ENCODE measurements at regions of chr5 and their contacts with region 1.

Region 1: DNA sequence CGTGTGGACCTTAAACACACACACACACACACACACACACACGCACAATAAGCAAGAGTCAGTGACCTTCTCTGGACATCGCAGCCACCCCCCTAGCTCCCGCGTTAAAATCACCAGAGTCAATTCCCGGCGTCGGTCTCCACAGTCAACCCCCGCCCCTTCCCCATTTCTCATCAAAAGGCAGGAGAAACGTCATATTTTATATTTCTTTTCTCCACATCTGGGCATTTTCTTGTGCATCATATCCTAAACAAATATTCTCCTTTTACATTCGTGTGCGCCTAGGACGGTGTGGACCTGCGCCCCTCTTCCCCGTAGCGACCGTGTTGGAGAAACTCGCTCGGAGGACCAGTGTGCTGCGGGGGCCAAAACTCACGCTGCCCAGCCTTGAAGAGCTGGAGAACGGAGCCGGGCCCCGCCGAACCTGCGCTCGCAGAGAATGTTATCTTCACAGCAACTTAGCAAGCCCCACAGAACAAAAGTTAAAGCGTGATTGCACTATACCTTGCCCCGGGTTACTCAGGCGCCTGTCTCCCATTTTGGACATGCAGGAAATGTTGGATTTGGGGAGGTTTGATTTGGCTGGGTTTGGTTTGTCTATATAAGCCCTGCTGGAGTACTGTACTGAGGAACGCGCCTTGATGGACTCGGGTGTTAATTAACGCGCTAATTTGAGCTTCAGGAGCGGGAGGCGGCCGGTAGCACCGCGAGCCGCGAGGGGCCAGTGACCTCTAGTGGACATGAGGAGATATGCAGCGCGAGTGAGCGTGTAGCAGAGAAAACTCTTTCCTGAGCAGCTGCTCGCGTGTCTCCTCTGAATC is 192.4 kb downstream of the MEF2C start:
- DNase-seq: peak; percentile 43 to 83 (median 54)
- ATAC-seq: peak; percentile 88
- H3K4me3 ChIP-seq: peak overlapping the region; percentile 3
- H3K4me3 Mint-ChIP-seq: peak overlapping the region; percentile 71
- H3K27ac ChIP-seq: no peak overlapping the region
- H3K27ac Mint-ChIP-seq: peak overlapping the region; percentile 9
- H3K4me1 ChIP-seq: peaks cover 24% of the 10 kb centered on the region
- H3K4me1 Mint-ChIP-seq: peaks cover 28% of the 10 kb centered on the region
- H3K27me3 ChIP-seq: peaks cover 86 to 98% of the 10 kb centered on the region in 2 experiments
- H3K27me3 Mint-ChIP-seq: peaks cover 96% of the 10 kb centered on the region
- CTCF ChIP-seq: peak; percentile 80

Region 2: DNA sequence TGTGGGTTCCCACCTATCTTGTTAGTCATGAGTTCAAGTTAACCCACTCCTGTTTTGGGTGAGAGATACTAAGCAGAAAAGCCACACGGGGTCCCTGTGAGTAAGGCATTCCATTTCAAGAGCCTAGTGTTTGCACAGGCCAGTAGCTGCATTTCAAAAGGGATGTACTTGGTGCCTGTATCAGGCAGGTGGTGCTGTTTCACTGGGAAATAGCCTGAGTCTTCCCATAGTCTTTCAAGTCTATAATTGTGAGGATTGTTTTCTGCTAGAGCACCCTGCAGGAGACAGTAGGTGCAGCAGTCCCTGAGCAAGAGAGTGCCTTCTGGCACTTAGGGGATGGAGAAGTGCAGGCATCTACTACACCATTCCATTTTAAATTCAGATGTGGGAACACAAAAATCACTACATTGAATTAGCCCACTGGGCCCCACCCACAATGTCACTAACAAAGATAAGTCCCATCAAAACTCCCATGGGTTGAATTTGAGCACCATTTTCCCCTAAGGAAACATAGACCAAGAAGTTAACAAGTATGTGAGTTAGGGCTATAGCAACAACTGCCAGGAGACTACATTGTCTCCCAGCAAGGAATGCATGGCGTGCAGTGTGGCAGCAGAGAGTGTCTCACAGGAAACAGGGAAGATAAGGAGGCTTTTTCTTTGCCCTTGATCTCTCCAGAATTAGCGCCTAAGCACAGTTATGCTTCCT is 1809.7 kb before region 1 on chr5:
- CTCF ChIA-PET with region 1: no interaction called
- POLR2A ChIA-PET with region 1: no interaction called
- intact Hi-C with region 1: loop called in 1 of 2 experiments (anchors 10 kb)
- DNase-seq: peak in 11 of 14 experiments; percentile 1 to 68 (median 8)
- ATAC-seq: peak; percentile 88
- H3K4me3 ChIP-seq: no peak overlapping the region
- H3K4me3 Mint-ChIP-seq: no peak overlapping the region
- H3K27ac ChIP-seq: no peak overlapping the region
- H3K27ac Mint-ChIP-seq: no peak overlapping the region
- H3K4me1 ChIP-seq: no peaks in the 10 kb centered on the region
- H3K4me1 Mint-ChIP-seq: no peaks in the 10 kb centered on the region
- H3K27me3 ChIP-seq: peaks cover 0 to 4% of the 10 kb centered on the region in 2 experiments
- H3K27me3 Mint-ChIP-seq: peaks cover 7% of the 10 kb centered on the region
- CTCF ChIP-seq: peak; percentile 42

Region 3: GRCh38 chr5:87421307-87421706 is 1269.3 kb before region 1 on chr5:
- CTCF ChIA-PET with region 1: no interaction called
- POLR2A ChIA-PET with region 1: no interaction called
- intact Hi-C with region 1: loop called in 1 of 2 experiments (anchors 10 kb)
- DNase-seq: no peak
- ATAC-seq: no peak
- H3K4me3 ChIP-seq: no peak overlapping the region
- H3K4me3 Mint-ChIP-seq: no peak overlapping the region
- H3K27ac ChIP-seq: no peak overlapping the region
- H3K27ac Mint-ChIP-seq: no peak overlapping the region
- H3K4me1 ChIP-seq: no peaks in the 10 kb centered on the region
- H3K4me1 Mint-ChIP-seq: no peaks in the 10 kb centered on the region
- H3K27me3 ChIP-seq: no peaks in the 10 kb centered on the region
- H3K27me3 Mint-ChIP-seq: no peaks in the 10 kb centered on the region
- CTCF ChIP-seq: no peak

Region 4: GRCh38 chr5:87780831-87781760 is 909.5 kb before region 1 on chr5:
- CTCF ChIA-PET with region 1: interaction called, 20 read pairs
- POLR2A ChIA-PET with region 1: interaction called, 5 read pairs
- intact Hi-C with region 1: loop called (anchors 1 to 2 kb)
- DNase-seq: peak; percentile 52 to 88 (median 69)
- ATAC-seq: peak; percentile 94
- H3K4me3 ChIP-seq: no peak overlapping the region
- H3K4me3 Mint-ChIP-seq: no peak overlapping the region
- H3K27ac ChIP-seq: no peak overlapping the region
- H3K27ac Mint-ChIP-seq: no peak overlapping the region
- H3K4me1 ChIP-seq: no peaks in the 10 kb centered on the region
- H3K4me1 Mint-ChIP-seq: peaks cover 4% of the 10 kb centered on the region
- H3K27me3 ChIP-seq: peaks cover 1 to 33% of the 10 kb centered on the region in 2 experiments
- H3K27me3 Mint-ChIP-seq: peaks cover 37% of the 10 kb centered on the region
- CTCF ChIP-seq: peak; percentile 94

Region 5: GRCh38 chr5:88680253-88681132 is 10.1 kb before region 1 on chr5:
- CTCF ChIA-PET with region 1: interaction called, 18 read pairs
- POLR2A ChIA-PET with region 1: interaction called, 5 read pairs
- intact Hi-C with region 1: no loop called
- DNase-seq: peak; percentile 53 to 87 (median 67)
- ATAC-seq: peak; percentile 85
- H3K4me3 ChIP-seq: peak overlapping the region; percentile 40
- H3K4me3 Mint-ChIP-seq: peak overlapping the region; percentile 44
- H3K27ac ChIP-seq: no peak overlapping the region
- H3K27ac Mint-ChIP-seq: no peak overlapping the region
- H3K4me1 ChIP-seq: peaks cover 40% of the 10 kb centered on the region
- H3K4me1 Mint-ChIP-seq: peaks cover 25% of the 10 kb centered on the region
- H3K27me3 ChIP-seq: peaks cover 83 to 96% of the 10 kb centered on the region in 2 experiments
- H3K27me3 Mint-ChIP-seq: peaks cover 91% of the 10 kb centered on the region
- CTCF ChIP-seq: peak; percentile 93

Region 6: DNA sequence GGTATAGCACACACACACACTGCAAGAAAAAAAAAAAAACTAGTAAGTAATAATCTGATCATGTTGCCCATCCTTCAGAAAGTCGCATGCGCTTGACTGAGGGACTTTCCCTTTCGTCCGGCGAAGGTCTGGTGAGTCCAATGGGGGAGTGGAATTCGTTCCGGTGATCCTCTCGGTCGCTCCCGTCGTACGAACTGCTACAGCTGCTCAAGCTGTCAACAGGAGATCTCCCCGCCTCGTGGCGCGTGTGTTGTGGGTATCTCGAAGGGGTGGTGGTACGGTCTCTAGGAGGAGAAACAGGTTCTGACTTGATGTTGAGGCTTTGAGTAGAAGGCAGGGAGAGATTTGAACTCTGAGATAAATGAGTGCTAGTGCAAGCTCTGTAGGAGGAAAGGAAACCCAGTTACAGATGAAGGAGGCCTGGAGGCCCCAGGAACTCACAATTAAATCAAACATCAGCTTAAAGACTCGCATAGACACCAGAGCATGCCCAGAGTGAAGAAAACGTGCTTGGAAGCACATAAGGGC is 32.0 kb after region 1 on chr5:
- CTCF ChIA-PET with region 1: no interaction called
- POLR2A ChIA-PET with region 1: no interaction called
- intact Hi-C with region 1: no loop called
- DNase-seq: no peak
- ATAC-seq: no peak
- H3K4me3 ChIP-seq: no peak overlapping the region
- H3K4me3 Mint-ChIP-seq: no peak overlapping the region
- H3K27ac ChIP-seq: no peak overlapping the region
- H3K27ac Mint-ChIP-seq: no peak overlapping the region
- H3K4me1 ChIP-seq: no peaks in the 10 kb centered on the region
- H3K4me1 Mint-ChIP-seq: no peaks in the 10 kb centered on the region
- H3K27me3 ChIP-seq: peaks cover 0 to 26% of the 10 kb centered on the region in 2 experiments
- H3K27me3 Mint-ChIP-seq: peaks cover 50% of the 10 kb centered on the region
- CTCF ChIP-seq: no peak